Activated CD8-positive, alpha-beta memory T cell treated with anti-CD3 and anti-CD28 coated beads, Interleukin-2, amount 10 ng/mL, durations not matched to agents 7 days and 5 days (primary cell): ENCODE measurements at regions of chr3 and their contacts with region 1.

Region 1: DNA sequence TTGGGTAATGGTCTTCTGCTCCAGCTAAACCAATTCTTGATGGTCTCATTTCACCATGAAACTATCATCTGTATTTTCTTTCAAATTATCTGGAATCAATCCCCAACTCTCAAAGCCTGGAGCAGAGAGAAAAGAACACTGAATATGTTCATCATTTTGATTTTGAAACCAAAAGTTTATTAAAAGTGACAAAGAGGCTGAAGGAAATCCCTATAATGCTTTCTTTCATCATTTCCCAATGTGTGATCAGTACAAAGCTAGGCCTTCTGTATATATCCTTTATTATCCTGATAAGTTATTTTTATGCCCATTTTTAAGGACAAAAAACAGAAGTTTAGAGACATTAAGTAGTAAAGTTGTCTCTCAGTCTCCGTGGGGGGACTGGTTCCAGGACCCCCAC is 50.1 kb upstream of the MBNL1 start:
- DNase-seq: no peak
- ATAC-seq: no peak
- H3K4me3 Mint-ChIP-seq: peak overlapping the region; percentile 44
- H3K27ac Mint-ChIP-seq: peak overlapping the region; percentile 75
- H3K4me1 Mint-ChIP-seq: peaks cover 52% of the 10 kb centered on the region
- H3K27me3 Mint-ChIP-seq: no peaks in the 10 kb centered on the region

Region 2: GRCh38 chr3:152205097-152205593 is 13.5 kb before region 1 on chr3:
- CTCF ChIA-PET with region 1: interaction called, 12 read pairs
- DNase-seq: no peak
- ATAC-seq: peak; percentile 31
- H3K4me3 Mint-ChIP-seq: peak overlapping the region; percentile 76
- H3K27ac Mint-ChIP-seq: peak overlapping the region; percentile 89
- H3K4me1 Mint-ChIP-seq: peaks cover 65% of the 10 kb centered on the region
- H3K27me3 Mint-ChIP-seq: no peaks in the 10 kb centered on the region